Naive thymus-derived CD4-positive, alpha-beta T cell (primary cell): ENCODE measurements at regions of chr11 and their contacts with region 1.

Region 1: DNA sequence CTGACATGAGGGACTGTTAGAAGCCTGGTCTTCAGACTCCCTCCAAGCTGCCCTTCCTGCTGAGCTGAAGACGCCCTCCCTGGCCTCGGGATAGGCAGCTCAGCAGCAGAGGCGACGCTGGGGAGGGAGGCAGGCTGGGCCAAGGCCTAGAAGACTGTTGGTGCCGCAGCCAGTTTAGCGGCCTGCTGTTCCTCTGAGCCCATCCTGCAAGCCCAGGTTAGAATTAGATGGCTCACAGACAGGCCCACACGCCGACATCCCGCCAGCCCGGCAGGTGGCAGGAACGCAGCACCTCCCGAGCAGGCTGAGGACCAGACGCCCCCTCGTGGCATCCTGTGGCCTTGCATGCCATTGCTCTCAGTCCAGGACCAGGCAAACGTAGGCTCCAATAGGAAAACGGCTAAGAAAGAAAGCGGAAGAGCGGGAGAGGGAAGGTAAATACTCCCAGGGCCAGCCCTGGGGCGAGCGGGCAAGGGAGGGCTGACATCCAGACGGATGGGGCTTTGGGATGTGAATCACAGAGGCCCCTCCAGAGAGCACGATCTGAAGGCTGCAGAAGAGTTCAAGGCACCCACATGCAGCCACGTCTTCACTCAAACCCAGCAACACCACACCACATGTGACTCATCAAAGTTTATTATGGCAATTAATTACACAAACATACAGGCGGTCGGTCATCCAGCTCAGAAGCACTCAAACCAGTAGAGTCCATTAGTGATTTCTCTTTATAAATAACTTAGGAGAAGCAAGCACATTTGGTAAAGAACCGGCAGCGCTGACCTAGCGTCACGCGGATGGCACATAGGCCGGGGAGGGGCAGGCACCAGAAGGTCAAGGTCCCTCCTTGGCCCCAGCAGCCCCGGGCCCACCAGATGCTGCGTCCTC is 27.6 kb downstream of the CD5 start:
- DNase-seq: peak; percentile 82 to 94 (median 88)
- ATAC-seq: peak; percentile 96
- H3K4me3 ChIP-seq: no peak overlapping the region
- H3K4me3 Mint-ChIP-seq: peak overlapping the region; percentile 15 to 77 (median 54)
- H3K27ac ChIP-seq: peak overlapping the region; percentile 57
- H3K27ac Mint-ChIP-seq: peak overlapping the region; percentile 4 to 87 (median 72)
- H3K4me1 ChIP-seq: peaks cover 4 to 18% of the 10 kb centered on the region in 2 donors
- H3K4me1 Mint-ChIP-seq: peaks cover 10 to 29% (median 23%) of the 10 kb centered on the region in 7 donors
- H3K27me3 ChIP-seq: no peaks in the 10 kb centered on the region
- H3K27me3 Mint-ChIP-seq: no peaks in the 10 kb centered on the region

Region 2: DNA sequence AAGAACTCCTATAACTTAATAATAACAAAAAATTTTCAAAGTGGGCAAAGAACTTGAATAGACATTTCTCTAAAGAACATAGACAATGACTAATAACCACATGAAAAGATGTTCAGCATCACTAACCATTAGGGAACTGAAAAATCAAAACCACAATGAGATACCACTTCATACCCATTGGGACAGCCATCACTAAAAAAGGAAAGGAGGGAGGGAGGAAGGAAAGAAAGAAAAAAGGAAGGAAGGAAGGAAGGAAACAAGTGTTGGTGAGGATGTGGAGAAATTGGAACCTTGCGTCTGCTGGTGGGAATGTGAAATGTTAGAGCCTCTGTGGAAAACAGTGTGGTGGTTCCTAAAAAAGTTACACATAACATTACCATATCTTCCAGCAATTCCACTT is 558.9 kb before region 1 on chr11:
- CTCF ChIA-PET with region 1: no interaction called
- POLR2A ChIA-PET with region 1: no interaction called
- intact Hi-C with region 1: no loop called
- DNase-seq: no peak
- ATAC-seq: no peak
- H3K4me3 ChIP-seq: no peak overlapping the region
- H3K4me3 Mint-ChIP-seq: no peak overlapping the region
- H3K27ac ChIP-seq: no peak overlapping the region
- H3K27ac Mint-ChIP-seq: no peak overlapping the region
- H3K4me1 ChIP-seq: no peaks in the 10 kb centered on the region
- H3K4me1 Mint-ChIP-seq: no peaks in the 10 kb centered on the region
- H3K27me3 ChIP-seq: no peaks in the 10 kb centered on the region
- H3K27me3 Mint-ChIP-seq: peaks cover 7 to 30% (median 24%) of the 10 kb centered on the region in 5 donors

Region 3: DNA sequence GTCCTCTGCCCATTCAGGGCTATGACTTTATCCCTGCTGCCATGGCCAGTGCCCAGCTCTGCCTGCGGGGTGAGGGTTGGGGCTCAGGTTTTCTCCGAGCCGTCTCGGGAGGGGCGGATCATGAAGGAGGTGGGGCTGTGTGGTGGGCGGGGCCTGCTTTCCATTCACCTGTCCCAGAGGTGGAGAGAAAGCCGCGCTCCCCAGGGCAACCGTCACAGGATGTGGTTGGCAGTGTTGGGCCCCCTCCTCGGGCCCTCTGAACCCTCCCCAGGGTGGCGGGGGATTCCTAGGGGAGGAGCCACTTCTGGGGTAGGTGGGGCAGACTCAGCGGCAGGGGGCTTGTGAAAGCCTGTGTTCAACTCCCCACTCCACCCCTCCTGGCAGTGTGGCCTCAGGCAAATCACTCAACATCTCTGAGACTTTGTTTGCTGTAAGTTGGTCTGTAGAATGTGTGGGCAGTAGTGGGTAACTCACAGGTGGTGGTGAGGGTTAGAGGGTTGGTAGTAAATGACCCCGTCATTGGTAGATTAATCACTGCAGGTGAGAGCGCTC is 108.1 kb before region 1 on chr11:
- CTCF ChIA-PET with region 1: interaction called, 3 read pairs
- POLR2A ChIA-PET with region 1: no interaction called
- intact Hi-C with region 1: loop called in 1 of 2 experiments (anchors 1 kb)
- DNase-seq: peak; percentile 72 to 98 (median 96)
- ATAC-seq: peak; percentile 91
- H3K4me3 ChIP-seq: peak overlapping the region; percentile 53
- H3K4me3 Mint-ChIP-seq: peak overlapping the region; percentile 68 to 90 (median 81)
- H3K27ac ChIP-seq: peak overlapping the region; percentile 82
- H3K27ac Mint-ChIP-seq: peak overlapping the region; percentile 88 to 100 (median 98)
- H3K4me1 ChIP-seq: peaks cover 49 to 56% of the 10 kb centered on the region in 2 donors
- H3K4me1 Mint-ChIP-seq: peaks cover 40 to 79% (median 76%) of the 10 kb centered on the region in 7 donors
- H3K27me3 ChIP-seq: no peaks in the 10 kb centered on the region
- H3K27me3 Mint-ChIP-seq: no peaks in the 10 kb centered on the region

Region 4: DNA sequence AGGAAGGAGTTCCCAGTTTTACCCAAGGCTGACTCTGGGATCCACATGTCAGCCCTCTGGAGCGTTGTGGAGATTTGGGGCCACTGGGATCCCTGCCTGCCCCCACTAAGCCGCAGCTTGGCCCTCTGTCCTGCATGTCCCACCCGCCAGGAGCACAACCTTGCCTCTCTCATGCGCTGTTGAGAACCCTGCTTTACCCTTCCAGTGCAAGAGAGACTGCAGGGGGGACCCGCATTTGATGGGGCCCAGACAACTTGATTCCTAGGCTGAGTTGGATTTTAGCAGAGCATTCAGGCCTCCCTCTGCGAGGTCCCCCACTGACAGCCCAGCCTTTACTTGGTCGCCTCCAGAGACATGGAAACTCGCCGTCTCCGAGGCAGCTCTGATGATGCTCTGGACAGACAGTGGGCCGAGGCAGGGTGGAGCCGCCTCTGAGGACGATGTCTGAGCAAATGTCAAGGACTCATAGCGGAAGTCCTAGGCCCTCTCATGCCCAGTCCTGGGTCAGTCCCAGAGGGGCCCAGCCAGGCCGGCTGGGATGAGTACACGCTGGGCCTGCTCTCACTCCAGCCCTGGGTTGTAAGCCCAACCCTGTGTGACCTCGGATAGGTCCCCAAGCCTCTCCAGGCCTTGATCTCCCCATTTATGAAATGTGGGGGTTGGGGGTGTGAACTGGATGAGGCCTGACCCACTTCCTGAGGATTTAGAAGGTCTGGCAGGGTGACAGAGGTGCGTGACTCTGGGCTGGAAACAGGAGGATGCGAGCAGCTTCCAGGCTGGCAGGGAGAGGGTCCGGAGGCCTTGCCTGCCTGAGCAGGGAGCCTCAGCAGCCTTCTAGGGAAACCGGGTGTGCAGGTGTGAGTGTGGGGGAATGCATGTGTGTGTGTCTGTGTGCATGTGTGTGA is 27.0 kb before region 1 on chr11:
- CTCF ChIA-PET with region 1: interaction called, 6 read pairs
- POLR2A ChIA-PET with region 1: interaction called, 11 read pairs
- intact Hi-C with region 1: loop called in 1 of 2 experiments (anchors 1 kb)
- DNase-seq: peak in 3 of 9 donors; percentile 39 to 47 (median 40)
- ATAC-seq: peak; percentile 28
- H3K4me3 ChIP-seq: peak overlapping the region; percentile 100
- H3K4me3 Mint-ChIP-seq: peak overlapping the region in 1 of 10 donors; percentile 97
- H3K27ac ChIP-seq: peak overlapping the region; percentile 98
- H3K27ac Mint-ChIP-seq: no peak overlapping the region
- H3K4me1 ChIP-seq: peaks cover 39 to 46% of the 10 kb centered on the region in 2 donors
- H3K4me1 Mint-ChIP-seq: peaks cover 17 to 48% (median 40%) of the 10 kb centered on the region in 7 donors
- H3K27me3 ChIP-seq: no peaks in the 10 kb centered on the region
- H3K27me3 Mint-ChIP-seq: no peaks in the 10 kb centered on the region

Region 5: GRCh38 chr11:61161190-61162091 is 31.6 kb after region 1 on chr11 and contains the start of gene VPS37C:
- CTCF ChIA-PET with region 1: no interaction called
- POLR2A ChIA-PET with region 1: interaction called, 3 read pairs
- intact Hi-C with region 1: loop called (anchors 1 to 2 kb)
- DNase-seq: peak; percentile 80 to 99 (median 87)
- ATAC-seq: peak; percentile 83
- H3K4me3 ChIP-seq: peak within 1 kb of the TSS; percentile 74
- H3K4me3 Mint-ChIP-seq: peak within 1 kb of the TSS; percentile 85 to 96 (median 90)
- H3K27ac ChIP-seq: peak within 1 kb of the TSS; percentile 78
- H3K27ac Mint-ChIP-seq: peak within 1 kb of the TSS; percentile 84 to 96 (median 94)
- H3K4me1 ChIP-seq: peaks cover 7 to 14% of the 10 kb centered on the region in 2 donors
- H3K4me1 Mint-ChIP-seq: peaks cover 31 to 62% (median 48%) of the 10 kb centered on the region in 7 donors
- H3K27me3 ChIP-seq: no peaks in the 10 kb centered on the region
- H3K27me3 Mint-ChIP-seq: no peaks in the 10 kb centered on the region
- total RNA-seq, gene VPS37C: 4.1 to 12.0 (median 7.9) TPM